ENCODE measurements at regions of chr4 and their contacts with region 1.

Region 1: GRCh38 chr4:4995103-4995907 is 24.0 kb downstream of the CYTL1 start:
- DNase-seq: peak; percentile 88
- H3K4me3 ChIP-seq: no peak overlapping the region
- H3K27ac ChIP-seq: peak overlapping the region in 2 of 4 donors; percentile 26 to 40
- H3K4me1 ChIP-seq: peaks cover 0 to 37% (median 32%) of the 10 kb centered on the region in 4 donors
- H3K27me3 ChIP-seq: no peaks in the 10 kb centered on the region
- CTCF ChIP-seq: peak; percentile 51 to 92 (median 78)
- EP300 ChIP-seq: no peak
- POLR2A ChIP-seq: no peak

Region 2: GRCh38 chr4:4488405-4489404 is 506.6 kb before region 1 on chr4:
- intact Hi-C with region 1: loop called (anchors 5 kb)
- DNase-seq: peak; percentile 74
- H3K4me3 ChIP-seq: no peak overlapping the region
- H3K27ac ChIP-seq: no peak overlapping the region
- H3K4me1 ChIP-seq: peaks cover 0 to 9% (median 2%) of the 10 kb centered on the region in 4 donors
- H3K27me3 ChIP-seq: no peaks in the 10 kb centered on the region
- CTCF ChIP-seq: peak; percentile 55 to 87 (median 76)
- EP300 ChIP-seq: no peak
- POLR2A ChIP-seq: no peak

Region 3: DNA sequence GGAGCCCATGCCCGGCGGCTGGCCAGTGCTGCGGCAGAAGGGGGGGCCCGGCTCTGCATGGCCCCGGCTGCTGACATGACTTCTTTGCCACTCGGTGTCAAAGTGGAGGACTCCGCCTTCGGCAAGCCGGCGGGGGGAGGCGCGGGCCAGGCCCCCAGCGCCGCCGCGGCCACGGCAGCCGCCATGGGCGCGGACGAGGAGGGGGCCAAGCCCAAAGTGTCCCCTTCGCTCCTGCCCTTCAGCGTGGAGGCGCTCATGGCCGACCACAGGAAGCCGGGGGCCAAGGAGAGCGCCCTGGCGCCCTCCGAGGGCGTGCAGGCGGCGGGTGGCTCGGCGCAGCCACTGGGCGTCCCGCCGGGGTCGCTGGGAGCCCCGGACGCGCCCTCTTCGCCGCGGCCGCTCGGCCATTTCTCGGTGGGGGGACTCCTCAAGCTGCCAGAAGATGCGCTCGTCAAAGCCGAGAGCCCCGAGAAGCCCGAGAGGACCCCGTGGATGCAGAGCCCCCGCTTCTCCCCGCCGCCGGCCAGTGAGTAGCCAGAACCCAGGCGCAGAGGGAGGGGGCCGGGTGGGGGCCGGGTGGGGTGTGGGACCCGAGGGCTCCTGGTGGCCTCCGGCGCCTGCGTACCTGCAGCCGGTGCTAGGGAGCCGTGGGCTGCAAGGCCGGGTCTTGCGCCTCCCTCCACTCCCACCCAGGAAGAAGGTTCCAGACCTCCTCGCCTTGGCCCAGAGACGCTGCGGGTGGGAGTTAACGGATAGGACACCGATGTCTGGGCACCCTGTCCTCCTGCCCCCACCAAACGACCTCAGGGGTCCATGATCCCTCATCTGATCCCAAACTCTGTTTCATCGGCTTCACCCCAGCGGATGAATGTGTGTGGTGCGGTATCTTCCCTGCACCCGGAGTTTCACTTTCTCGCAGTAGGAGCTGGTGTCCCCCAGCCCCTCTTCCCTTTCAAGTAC is 135.2 kb before region 1 on chr4:
- intact Hi-C with region 1: loop called (anchors 5 kb)
- DNase-seq: no peak
- H3K4me3 ChIP-seq: peak overlapping the region; percentile 21 to 65 (median 56)
- H3K27ac ChIP-seq: peak overlapping the region in 2 of 4 donors; percentile 35 to 44
- H3K4me1 ChIP-seq: peaks cover 0 to 60% (median 53%) of the 10 kb centered on the region in 4 donors
- H3K27me3 ChIP-seq: peaks cover 80 to 98% (median 91%) of the 10 kb centered on the region in 3 donors
- CTCF ChIP-seq: no peak
- EP300 ChIP-seq: no peak
- POLR2A ChIP-seq: no peak

Region 4: DNA sequence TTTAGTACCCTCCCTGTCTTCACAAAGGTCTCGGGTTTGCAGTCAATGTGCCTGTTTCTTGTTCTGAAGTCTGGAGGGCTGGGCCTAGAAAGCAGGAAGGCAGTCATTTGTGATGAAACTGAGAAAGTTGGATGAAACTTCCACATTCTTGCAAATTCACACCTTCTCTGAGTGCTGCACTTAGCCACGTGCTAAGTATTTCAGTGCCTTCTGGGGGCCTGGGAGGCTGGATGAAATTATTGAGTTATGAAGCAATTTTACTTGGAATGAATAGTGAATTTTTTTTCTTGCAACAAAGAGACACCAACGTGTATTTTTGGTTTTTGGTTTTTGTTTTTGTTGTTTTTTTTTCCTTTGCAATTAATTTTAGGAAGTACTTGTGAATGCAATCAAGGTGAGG is 64.6 kb before region 1 on chr4:
- intact Hi-C with region 1: no loop called
- DNase-seq: no peak
- H3K4me3 ChIP-seq: no peak overlapping the region
- H3K27ac ChIP-seq: no peak overlapping the region
- H3K4me1 ChIP-seq: no peaks in the 10 kb centered on the region
- H3K27me3 ChIP-seq: no peaks in the 10 kb centered on the region
- CTCF ChIP-seq: no peak
- EP300 ChIP-seq: no peak
- POLR2A ChIP-seq: no peak

Region 5: DNA sequence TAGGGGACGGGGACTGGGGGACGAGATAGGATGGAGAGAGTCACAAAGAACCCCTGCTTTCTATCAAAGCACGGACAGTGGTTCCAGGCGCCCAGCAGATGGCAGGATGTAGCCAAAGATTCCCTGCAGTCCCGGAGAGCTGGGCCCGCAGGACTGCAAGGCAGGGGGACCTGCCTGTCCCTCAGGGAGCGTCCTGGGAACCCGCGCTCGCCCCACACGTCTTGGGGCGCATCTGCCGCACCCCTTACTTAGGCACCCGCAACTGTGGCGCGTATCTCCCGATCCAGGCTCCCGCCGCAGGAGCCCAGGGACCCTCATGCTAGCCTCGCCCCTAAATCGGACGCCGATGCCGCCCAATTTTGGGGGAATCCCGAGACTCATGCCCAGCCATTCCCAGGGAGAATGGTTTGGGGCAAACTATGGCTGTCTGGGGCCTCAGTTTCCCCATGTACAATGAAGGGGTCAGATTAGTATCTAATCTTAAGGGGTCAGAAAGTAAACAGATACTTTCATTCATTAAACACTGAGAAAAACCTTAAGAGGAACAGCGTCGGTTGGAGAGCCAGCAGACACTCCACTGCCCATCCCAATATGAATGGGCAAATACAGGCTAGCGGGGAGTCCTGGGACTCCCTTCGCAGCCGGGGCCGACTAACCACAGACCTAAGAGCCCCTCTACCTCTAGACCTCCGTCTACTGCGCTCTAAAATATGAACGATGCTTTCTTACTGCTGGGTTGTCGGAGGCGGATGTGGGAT is 55.4 kb after region 1 on chr4:
- intact Hi-C with region 1: loop called (anchors 2 kb)
- DNase-seq: peak; percentile 87
- H3K4me3 ChIP-seq: peak overlapping the region; percentile 32 to 60 (median 52)
- H3K27ac ChIP-seq: peak overlapping the region; percentile 10 to 60 (median 36)
- H3K4me1 ChIP-seq: peaks cover 0 to 22% (median 18%) of the 10 kb centered on the region in 4 donors
- H3K27me3 ChIP-seq: no peaks in the 10 kb centered on the region
- CTCF ChIP-seq: peak; percentile 19 to 66 (median 44)
- EP300 ChIP-seq: no peak
- POLR2A ChIP-seq: no peak

Region 6: GRCh38 chr4:5142726-5143125 is 147.4 kb after region 1 on chr4:
- intact Hi-C with region 1: loop called (anchors 2 kb)
- DNase-seq: no peak
- H3K4me3 ChIP-seq: no peak overlapping the region
- H3K27ac ChIP-seq: no peak overlapping the region
- H3K4me1 ChIP-seq: no peaks in the 10 kb centered on the region
- H3K27me3 ChIP-seq: no peaks in the 10 kb centered on the region
- CTCF ChIP-seq: peak in 1 of 4 experiments; percentile 26
- EP300 ChIP-seq: no peak
- POLR2A ChIP-seq: no peak

Measured in sigmoid colon (tissue), 7 donors.